ENCODE measurements at regions of chr15 and their contacts with region 1.

Region 1: GRCh38 chr15:81265944-81266775 is 57.8 kb downstream of the STARD5 start:
- DNase-seq: peak; percentile 91
- ATAC-seq: peak; percentile 92
- H3K4me3 Mint-ChIP-seq: peak overlapping the region; percentile 49
- H3K27ac Mint-ChIP-seq: peak overlapping the region; percentile 63
- H3K4me1 Mint-ChIP-seq: peaks cover 56% of the 10 kb centered on the region
- H3K27me3 Mint-ChIP-seq: no peaks in the 10 kb centered on the region

Region 2: DNA sequence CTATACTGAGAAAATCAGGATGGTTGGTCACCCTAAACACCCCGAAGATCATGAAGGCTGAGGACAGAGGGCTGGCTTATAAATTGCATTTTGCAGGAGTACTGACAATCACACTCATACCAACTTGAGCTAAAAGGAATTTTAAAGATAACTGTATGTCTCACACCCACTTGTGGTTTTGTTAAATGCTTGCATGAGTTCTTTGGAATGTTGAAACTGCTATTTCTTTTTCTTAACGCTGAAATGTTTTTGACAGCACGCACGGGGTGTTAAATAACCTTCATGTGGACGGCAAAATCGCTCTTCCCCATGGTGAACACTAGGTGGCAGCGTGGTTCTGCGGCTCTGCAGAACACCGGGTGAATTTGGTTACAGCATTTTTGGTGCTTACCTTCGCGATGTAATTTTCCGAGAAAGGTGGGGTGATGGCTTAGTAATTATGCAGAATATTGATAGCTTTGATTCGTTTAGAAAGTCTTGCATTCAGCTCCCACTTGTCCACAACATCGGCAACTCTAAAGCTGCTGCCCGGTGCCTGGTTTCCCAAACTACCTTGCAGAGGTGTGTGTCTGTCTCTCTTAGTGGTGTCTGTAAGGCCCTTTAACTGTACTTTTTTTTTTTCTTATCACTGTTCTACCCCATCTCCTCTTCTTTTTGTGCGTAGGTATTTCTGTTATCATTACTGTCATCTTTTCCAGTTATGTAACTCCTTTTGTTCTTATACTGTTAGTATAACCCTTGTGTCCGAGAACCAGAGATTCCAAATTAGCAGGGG is 810.3 kb before region 1 on chr15:
- CTCF ChIA-PET with region 1: interaction called, 12 read pairs
- POLR2A ChIA-PET with region 1: no interaction called
- DNase-seq: peak; percentile 69
- ATAC-seq: peak; percentile 74
- H3K4me3 Mint-ChIP-seq: no peak overlapping the region
- H3K27ac Mint-ChIP-seq: no peak overlapping the region
- H3K4me1 Mint-ChIP-seq: peaks cover 2% of the 10 kb centered on the region
- H3K27me3 Mint-ChIP-seq: peaks cover 10% of the 10 kb centered on the region

Region 3: GRCh38 chr15:81007428-81008064 is 258.6 kb before region 1 on chr15:
- CTCF ChIA-PET with region 1: interaction called, 21 read pairs
- POLR2A ChIA-PET with region 1: no interaction called
- DNase-seq: no peak
- ATAC-seq: no peak
- H3K4me3 Mint-ChIP-seq: no peak overlapping the region
- H3K27ac Mint-ChIP-seq: no peak overlapping the region
- H3K4me1 Mint-ChIP-seq: peaks cover 41% of the 10 kb centered on the region
- H3K27me3 Mint-ChIP-seq: no peaks in the 10 kb centered on the region

Region 4: GRCh38 chr15:81117136-81117535 is 149.0 kb before region 1 on chr15:
- CTCF ChIA-PET with region 1: interaction called, 304 read pairs
- POLR2A ChIA-PET with region 1: no interaction called
- DNase-seq: no peak
- ATAC-seq: no peak
- H3K4me3 Mint-ChIP-seq: no peak overlapping the region
- H3K27ac Mint-ChIP-seq: no peak overlapping the region
- H3K4me1 Mint-ChIP-seq: peaks cover 2% of the 10 kb centered on the region
- H3K27me3 Mint-ChIP-seq: peaks cover 43% of the 10 kb centered on the region

Region 5: GRCh38 chr15:81225161-81225671 is 40.9 kb before region 1 on chr15:
- CTCF ChIA-PET with region 1: interaction called, 44 read pairs
- POLR2A ChIA-PET with region 1: no interaction called
- DNase-seq: no peak
- ATAC-seq: no peak
- H3K4me3 Mint-ChIP-seq: no peak overlapping the region
- H3K27ac Mint-ChIP-seq: no peak overlapping the region
- H3K4me1 Mint-ChIP-seq: peaks cover 8% of the 10 kb centered on the region
- H3K27me3 Mint-ChIP-seq: no peaks in the 10 kb centered on the region

Region 6: GRCh38 chr15:81301815-81302399 is 35.7 kb after region 1 on chr15:
- CTCF ChIA-PET with region 1: interaction called, 96 read pairs
- POLR2A ChIA-PET with region 1: interaction called, 4 read pairs
- DNase-seq: peak; percentile 66
- ATAC-seq: peak; percentile 42
- H3K4me3 Mint-ChIP-seq: peak overlapping the region; percentile 99
- H3K27ac Mint-ChIP-seq: peak overlapping the region; percentile 93
- H3K4me1 Mint-ChIP-seq: peaks cover 51% of the 10 kb centered on the region
- H3K27me3 Mint-ChIP-seq: no peaks in the 10 kb centered on the region

Region 7: GRCh38 chr15:81381720-81382119 is 115.6 kb after region 1 on chr15:
- CTCF ChIA-PET with region 1: interaction called, 11 read pairs
- POLR2A ChIA-PET with region 1: no interaction called
- DNase-seq: no peak
- ATAC-seq: no peak
- H3K4me3 Mint-ChIP-seq: no peak overlapping the region
- H3K27ac Mint-ChIP-seq: no peak overlapping the region
- H3K4me1 Mint-ChIP-seq: peaks cover 14% of the 10 kb centered on the region
- H3K27me3 Mint-ChIP-seq: no peaks in the 10 kb centered on the region